Astrocyte of the cerebellum (primary cell): ENCODE measurements at regions of chr2 and their contacts with region 1.

Region 1: GRCh38 chr2:196551028-196551427 is 88.5 kb upstream of the CCDC150 start:
- DNase-seq: no peak
- H3K4me3 ChIP-seq: no peak overlapping the region
- CTCF ChIP-seq: no peak

Region 2: GRCh38 chr2:196486146-196486545 is 64.9 kb before region 1 on chr2:
- in situ Hi-C with region 1: no loop called
- DNase-seq: peak; percentile 20
- H3K4me3 ChIP-seq: no peak overlapping the region
- CTCF ChIP-seq: no peak

Region 3: GRCh38 chr2:196655761-196656160 is 104.7 kb after region 1 on chr2:
- in situ Hi-C with region 1: loop called (anchors 5 kb)
- DNase-seq: no peak
- H3K4me3 ChIP-seq: no peak overlapping the region
- CTCF ChIP-seq: no peak

Region 4: DNA sequence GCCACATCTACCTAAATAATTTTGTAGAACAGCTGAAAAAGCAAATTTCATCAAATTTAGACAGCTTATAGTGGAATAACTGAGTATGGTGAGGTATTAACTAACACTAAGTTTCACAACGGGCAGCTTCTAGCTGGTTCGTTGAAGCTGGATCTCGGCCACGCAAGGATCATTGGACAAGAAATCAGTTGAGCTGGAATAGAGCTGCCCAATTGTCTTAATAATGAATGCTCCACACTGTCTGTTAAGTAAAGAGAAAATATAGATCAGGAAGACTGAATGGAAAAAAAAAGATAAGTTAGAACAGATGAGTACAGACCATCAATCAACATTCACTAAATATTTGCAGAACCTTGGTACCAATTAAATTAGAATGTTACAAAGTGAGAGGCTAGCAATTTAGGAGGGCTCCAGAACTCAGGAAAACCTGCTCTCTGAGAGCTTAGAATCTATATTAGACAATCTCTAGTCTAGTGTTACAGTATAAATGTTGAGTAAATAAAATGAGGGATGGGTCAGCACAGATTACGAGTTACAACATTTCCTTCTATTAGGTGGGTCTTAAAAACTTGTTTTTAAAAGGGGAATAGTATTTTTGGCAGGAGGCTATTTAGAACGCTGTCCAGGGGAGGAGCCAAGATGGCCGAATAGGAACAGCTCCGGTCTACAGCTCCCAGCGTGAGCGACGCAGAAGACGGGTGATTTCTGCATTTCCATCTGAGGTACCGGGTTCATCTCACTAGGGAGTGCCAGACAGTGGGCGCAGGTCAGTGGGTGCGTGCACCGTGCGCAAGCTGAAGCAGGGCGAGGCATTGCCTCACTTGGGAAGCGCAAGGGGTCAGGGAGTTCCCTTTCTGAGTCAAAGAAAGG is 1177.5 kb after region 1 on chr2:
- in situ Hi-C with region 1: no loop called
- DNase-seq: no peak
- H3K4me3 ChIP-seq: no peak overlapping the region
- CTCF ChIP-seq: no peak